GM12878 (cell line): ENCODE measurements at regions of chr21 and their contacts with region 1.

Region 1: GRCh38 chr21:14567331-14568279 is 21.5 kb upstream of the SAMSN1 start:
- DNase-seq: no peak
- ATAC-seq: peak; percentile 81
- H3K4me3 ChIP-seq: peak overlapping the region; percentile 42
- H3K27ac ChIP-seq: peak overlapping the region; percentile 69
- H3K4me1 ChIP-seq: peaks cover 22% of the 10 kb centered on the region
- H3K27me3 ChIP-seq: no peaks in the 10 kb centered on the region
- CTCF ChIP-seq: no peak
- EP300 ChIP-seq: no peak
- POLR2A ChIP-seq: no peak
- RAD21 ChIP-seq: no peak

Region 2: DNA sequence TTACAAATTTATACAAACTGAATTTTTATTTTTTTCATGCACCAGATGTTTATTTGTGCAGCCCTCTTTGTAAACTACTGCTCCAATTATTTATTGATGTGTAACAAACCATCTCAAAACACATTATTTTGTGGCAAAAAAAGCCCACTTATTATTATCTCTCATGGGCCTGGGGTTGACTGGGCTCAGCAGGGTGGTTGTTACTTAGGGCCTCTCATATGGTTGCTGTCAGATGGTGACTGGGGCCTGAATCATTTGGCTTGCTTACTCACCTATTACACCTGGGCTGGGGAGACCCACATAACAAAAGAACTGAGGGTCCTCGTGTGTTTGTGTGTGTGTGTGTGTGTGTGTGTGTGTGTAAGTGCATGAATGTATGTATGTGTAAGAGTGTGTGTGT is 132.2 kb before region 1 on chr21:
- CTCF ChIA-PET with region 1: no interaction called
- POLR2A ChIA-PET with region 1: no interaction called
- RAD21 ChIA-PET with region 1: no interaction called
- SMC1A ChIA-PET with region 1: no interaction called
- in situ Hi-C with region 1: no loop called
- intact Hi-C with region 1: no loop called
- DNase-seq: no peak
- ATAC-seq: no peak
- H3K4me3 ChIP-seq: no peak overlapping the region
- H3K27ac ChIP-seq: no peak overlapping the region
- H3K4me1 ChIP-seq: no peaks in the 10 kb centered on the region
- H3K27me3 ChIP-seq: no peaks in the 10 kb centered on the region
- CTCF ChIP-seq: no peak
- EP300 ChIP-seq: no peak
- POLR2A ChIP-seq: no peak
- RAD21 ChIP-seq: no peak

Region 3: DNA sequence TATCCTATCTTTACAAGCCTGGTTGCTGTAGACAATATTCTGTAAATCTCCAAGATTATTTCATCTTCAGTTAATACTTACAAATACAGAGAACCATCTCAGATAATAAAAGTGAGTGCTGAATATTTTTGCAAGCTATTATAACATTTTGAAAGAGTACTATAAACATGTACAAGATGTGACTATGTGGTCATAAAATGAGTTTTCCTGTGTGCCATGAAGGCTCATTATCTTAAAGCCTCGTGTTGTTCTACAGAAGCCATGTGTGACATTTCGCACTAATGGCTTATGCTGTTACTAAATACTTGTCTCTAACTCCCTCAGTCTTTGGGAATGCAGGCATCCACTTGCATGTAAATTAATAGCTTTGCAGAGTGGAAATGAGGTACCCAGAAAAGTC is 69.8 kb before region 1 on chr21:
- CTCF ChIA-PET with region 1: no interaction called
- POLR2A ChIA-PET with region 1: no interaction called
- RAD21 ChIA-PET with region 1: no interaction called
- SMC1A ChIA-PET with region 1: no interaction called
- in situ Hi-C with region 1: no loop called
- intact Hi-C with region 1: no loop called
- DNase-seq: no peak
- ATAC-seq: no peak
- H3K4me3 ChIP-seq: no peak overlapping the region
- H3K27ac ChIP-seq: no peak overlapping the region
- H3K4me1 ChIP-seq: no peaks in the 10 kb centered on the region
- H3K27me3 ChIP-seq: no peaks in the 10 kb centered on the region
- CTCF ChIP-seq: no peak
- EP300 ChIP-seq: no peak
- POLR2A ChIP-seq: no peak
- RAD21 ChIP-seq: no peak

Region 4: GRCh38 chr21:14554948-14555347 is 12.7 kb before region 1 on chr21:
- CTCF ChIA-PET with region 1: interaction called, 7 read pairs
- POLR2A ChIA-PET with region 1: interaction called, 6 read pairs
- RAD21 ChIA-PET with region 1: interaction called, 11 read pairs
- SMC1A ChIA-PET with region 1: interaction called, 81 read pairs
- in situ Hi-C with region 1: no loop called
- intact Hi-C with region 1: no loop called
- DNase-seq: no peak
- ATAC-seq: peak; percentile 28; the same call in 1 of the 3 replicates
- H3K4me3 ChIP-seq: no peak overlapping the region
- H3K27ac ChIP-seq: no peak overlapping the region
- H3K4me1 ChIP-seq: peaks cover 19% of the 10 kb centered on the region
- H3K27me3 ChIP-seq: no peaks in the 10 kb centered on the region
- CTCF ChIP-seq: no peak
- EP300 ChIP-seq: no peak
- POLR2A ChIP-seq: no peak
- RAD21 ChIP-seq: no peak

Region 5: DNA sequence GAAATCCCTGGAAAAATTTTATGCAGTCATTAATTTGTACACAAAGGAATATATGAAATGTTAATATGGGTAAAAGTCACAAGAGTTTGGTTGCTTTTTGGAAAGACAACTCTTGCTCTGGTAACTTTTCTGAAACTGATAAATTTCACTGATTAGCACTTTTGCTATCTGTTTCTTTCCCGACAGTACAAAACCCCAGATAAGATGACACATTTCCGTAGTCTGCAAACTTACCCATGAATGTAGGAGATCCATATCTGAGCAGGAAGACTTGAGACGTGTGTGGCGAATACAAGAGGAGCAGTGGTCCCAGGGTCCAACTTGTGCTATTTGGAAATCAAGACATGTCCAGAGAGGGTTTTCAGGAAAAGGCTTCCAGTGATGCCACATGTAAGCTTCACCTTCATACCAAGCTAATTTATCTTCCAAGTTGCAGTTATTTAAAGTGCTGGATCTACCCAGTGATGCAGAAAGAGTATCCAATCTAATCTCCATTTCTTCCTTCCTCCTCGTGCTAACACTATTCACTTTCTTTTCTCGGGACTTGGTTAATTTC is 14.4 kb after region 1 on chr21:
- CTCF ChIA-PET with region 1: interaction called, 9 read pairs
- POLR2A ChIA-PET with region 1: interaction called, 8 read pairs
- RAD21 ChIA-PET with region 1: interaction called, 6 read pairs
- SMC1A ChIA-PET with region 1: interaction called, 11 read pairs
- in situ Hi-C with region 1: no loop called
- intact Hi-C with region 1: no loop called
- DNase-seq: no peak
- ATAC-seq: no peak
- H3K4me3 ChIP-seq: no peak overlapping the region
- H3K27ac ChIP-seq: no peak overlapping the region
- H3K4me1 ChIP-seq: no peaks in the 10 kb centered on the region
- H3K27me3 ChIP-seq: no peaks in the 10 kb centered on the region
- CTCF ChIP-seq: no peak
- EP300 ChIP-seq: no peak
- POLR2A ChIP-seq: no peak
- RAD21 ChIP-seq: no peak

Region 6: GRCh38 chr21:14591882-14592281 is 24.3 kb after region 1 on chr21:
- CTCF ChIA-PET with region 1: interaction called, 9 read pairs
- POLR2A ChIA-PET with region 1: interaction called, 3 read pairs
- RAD21 ChIA-PET with region 1: interaction called, 11 read pairs
- SMC1A ChIA-PET with region 1: interaction called, 37 read pairs
- in situ Hi-C with region 1: no loop called
- intact Hi-C with region 1: no loop called
- DNase-seq: no peak
- ATAC-seq: peak; percentile 79
- H3K4me3 ChIP-seq: no peak overlapping the region
- H3K27ac ChIP-seq: no peak overlapping the region
- H3K4me1 ChIP-seq: peaks cover 9% of the 10 kb centered on the region; the same call in 1 of the 2 replicates
- H3K27me3 ChIP-seq: no peaks in the 10 kb centered on the region
- CTCF ChIP-seq: no peak
- EP300 ChIP-seq: peak in 1 of 2 experiments; percentile 16; a peak in 2 of 4 replicates
- POLR2A ChIP-seq: no peak
- RAD21 ChIP-seq: no peak